A673 (cell line): ENCODE measurements at regions of chr12 and their contacts with region 1.

Region 1: DNA sequence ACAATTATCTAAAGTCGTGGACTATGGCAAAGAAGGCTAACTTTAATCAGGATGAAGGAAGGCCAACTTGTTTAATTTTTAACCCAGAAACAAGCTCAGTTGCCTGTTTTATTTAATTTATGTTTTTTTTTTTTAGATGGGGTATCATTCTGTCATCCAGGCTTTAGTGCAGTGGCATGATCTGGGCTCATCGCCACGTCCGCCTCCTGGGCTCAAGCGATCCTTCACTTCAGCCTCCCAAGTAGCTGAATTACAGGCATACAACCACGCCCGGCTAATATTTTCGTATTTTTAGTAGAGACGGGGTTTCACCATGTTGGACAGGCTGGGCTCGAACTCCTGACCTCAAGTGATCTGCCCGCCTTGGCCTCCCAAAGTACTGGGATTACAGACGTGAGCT is 19.7 kb downstream of the NUDT4 start:
- DNase-seq: no peak
- H3K4me3 ChIP-seq: no peak overlapping the region
- H3K27ac ChIP-seq: no peak overlapping the region
- H3K4me1 ChIP-seq: peaks cover 3% of the 10 kb centered on the region
- H3K27me3 ChIP-seq: no peaks in the 10 kb centered on the region
- CTCF ChIP-seq: no peak

Region 2: GRCh38 chr12:92717202-92717601 is 680.2 kb before region 1 on chr12:
- CTCF ChIA-PET with region 1: no interaction called
- POLR2A ChIA-PET with region 1: no interaction called
- intact Hi-C with region 1: loop called (anchors 5 kb)
- DNase-seq: peak; percentile 77
- H3K4me3 ChIP-seq: no peak overlapping the region
- H3K27ac ChIP-seq: no peak overlapping the region
- H3K4me1 ChIP-seq: peaks cover 4% of the 10 kb centered on the region
- H3K27me3 ChIP-seq: no peaks in the 10 kb centered on the region
- CTCF ChIP-seq: peak; percentile 83

Region 3: GRCh38 chr12:92784795-92785562 is 612.4 kb before region 1 on chr12:
- CTCF ChIA-PET with region 1: no interaction called
- POLR2A ChIA-PET with region 1: no interaction called
- intact Hi-C with region 1: loop called (anchors 5 kb)
- DNase-seq: peak; percentile 88
- H3K4me3 ChIP-seq: no peak overlapping the region
- H3K27ac ChIP-seq: no peak overlapping the region
- H3K4me1 ChIP-seq: no peaks in the 10 kb centered on the region
- H3K27me3 ChIP-seq: no peaks in the 10 kb centered on the region
- CTCF ChIP-seq: peak; percentile 67

Region 4: GRCh38 chr12:93025145-93025805 is 372.1 kb before region 1 on chr12:
- CTCF ChIA-PET with region 1: no interaction called
- POLR2A ChIA-PET with region 1: no interaction called
- intact Hi-C with region 1: loop called (anchors 1 kb)
- DNase-seq: peak; percentile 70
- H3K4me3 ChIP-seq: no peak overlapping the region
- H3K27ac ChIP-seq: no peak overlapping the region
- H3K4me1 ChIP-seq: peaks cover 5% of the 10 kb centered on the region
- H3K27me3 ChIP-seq: no peaks in the 10 kb centered on the region
- CTCF ChIP-seq: peak; percentile 71

Region 5: GRCh38 chr12:93098077-93098476 is 299.3 kb before region 1 on chr12:
- CTCF ChIA-PET with region 1: interaction called, 15 read pairs
- POLR2A ChIA-PET with region 1: no interaction called
- intact Hi-C with region 1: loop called (anchors 5 kb)
- DNase-seq: peak; percentile 79
- H3K4me3 ChIP-seq: no peak overlapping the region
- H3K27ac ChIP-seq: no peak overlapping the region
- H3K4me1 ChIP-seq: peaks cover 23% of the 10 kb centered on the region
- H3K27me3 ChIP-seq: no peaks in the 10 kb centered on the region
- CTCF ChIP-seq: peak; percentile 65

Region 6: DNA sequence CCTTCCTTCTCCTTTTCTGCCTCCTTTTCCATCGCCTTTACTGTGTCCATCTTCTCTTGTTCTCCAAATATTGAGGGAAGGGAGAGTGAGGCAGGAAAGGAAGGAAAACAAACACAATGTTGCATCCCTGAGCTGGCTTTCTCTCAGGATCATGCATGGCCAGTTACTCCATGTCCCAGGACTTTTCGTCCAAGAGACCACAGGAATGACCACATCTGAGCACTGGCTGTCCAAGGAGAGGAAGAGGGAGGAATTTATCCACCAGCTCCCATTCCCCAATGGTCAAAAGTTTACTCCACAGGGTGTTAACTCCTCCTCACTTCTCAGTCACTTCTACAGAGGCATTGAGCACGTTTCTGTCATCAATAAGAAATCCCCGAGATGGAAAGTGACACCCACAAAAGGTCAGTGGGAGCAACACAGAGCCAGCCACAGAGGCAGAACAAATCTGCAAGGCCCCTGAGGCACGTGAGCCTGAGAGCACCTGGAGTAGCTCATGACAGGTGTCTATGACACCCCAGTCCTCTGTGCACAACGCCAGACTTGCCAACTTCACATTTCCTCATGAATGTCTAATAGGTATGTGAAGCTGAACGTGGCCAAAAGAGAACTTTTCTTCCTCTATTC is 197.0 kb before region 1 on chr12:
- CTCF ChIA-PET with region 1: no interaction called
- POLR2A ChIA-PET with region 1: no interaction called
- intact Hi-C with region 1: loop called (anchors 5 kb)
- DNase-seq: no peak
- H3K4me3 ChIP-seq: no peak overlapping the region
- H3K27ac ChIP-seq: no peak overlapping the region
- H3K4me1 ChIP-seq: peaks cover 40% of the 10 kb centered on the region
- H3K27me3 ChIP-seq: no peaks in the 10 kb centered on the region
- CTCF ChIP-seq: no peak

Region 7: DNA sequence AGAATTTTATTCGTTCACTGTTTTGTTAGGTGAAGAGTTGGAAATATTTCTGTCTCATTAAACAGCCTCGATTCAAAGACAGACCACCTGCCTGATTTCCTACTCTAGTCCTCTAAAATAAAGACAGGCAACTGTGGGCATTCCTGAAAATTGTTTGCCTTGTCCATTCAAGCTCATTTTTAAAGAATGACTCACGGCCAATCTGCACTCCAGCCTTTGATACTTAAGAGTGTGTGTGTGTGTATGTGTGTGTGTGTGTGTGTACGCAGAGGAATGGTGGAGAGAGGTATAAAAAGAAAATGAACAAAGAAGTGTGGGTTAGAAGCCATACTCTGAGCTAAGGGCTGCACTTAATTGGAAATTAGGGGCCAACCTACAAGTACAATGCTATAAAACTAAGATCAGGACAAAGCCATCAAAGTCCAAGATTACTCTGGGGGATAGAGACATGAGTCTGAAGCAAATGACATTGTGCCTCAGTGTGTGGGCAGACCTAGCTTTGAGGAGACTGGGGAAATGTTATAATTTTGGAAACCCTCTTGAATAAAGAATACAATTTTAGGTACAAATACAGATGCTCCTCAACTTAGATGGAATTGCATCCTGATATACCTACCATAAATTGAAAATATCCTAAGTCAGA is 129.5 kb after region 1 on chr12:
- CTCF ChIA-PET with region 1: no interaction called
- POLR2A ChIA-PET with region 1: no interaction called
- intact Hi-C with region 1: no loop called
- DNase-seq: peak; percentile 55
- H3K4me3 ChIP-seq: no peak overlapping the region
- H3K27ac ChIP-seq: no peak overlapping the region
- H3K4me1 ChIP-seq: peaks cover 4% of the 10 kb centered on the region
- H3K27me3 ChIP-seq: no peaks in the 10 kb centered on the region
- CTCF ChIP-seq: no peak